Calu3 (cell line): ENCODE measurements at regions of chr7 and their contacts with region 1.

Region 1: DNA sequence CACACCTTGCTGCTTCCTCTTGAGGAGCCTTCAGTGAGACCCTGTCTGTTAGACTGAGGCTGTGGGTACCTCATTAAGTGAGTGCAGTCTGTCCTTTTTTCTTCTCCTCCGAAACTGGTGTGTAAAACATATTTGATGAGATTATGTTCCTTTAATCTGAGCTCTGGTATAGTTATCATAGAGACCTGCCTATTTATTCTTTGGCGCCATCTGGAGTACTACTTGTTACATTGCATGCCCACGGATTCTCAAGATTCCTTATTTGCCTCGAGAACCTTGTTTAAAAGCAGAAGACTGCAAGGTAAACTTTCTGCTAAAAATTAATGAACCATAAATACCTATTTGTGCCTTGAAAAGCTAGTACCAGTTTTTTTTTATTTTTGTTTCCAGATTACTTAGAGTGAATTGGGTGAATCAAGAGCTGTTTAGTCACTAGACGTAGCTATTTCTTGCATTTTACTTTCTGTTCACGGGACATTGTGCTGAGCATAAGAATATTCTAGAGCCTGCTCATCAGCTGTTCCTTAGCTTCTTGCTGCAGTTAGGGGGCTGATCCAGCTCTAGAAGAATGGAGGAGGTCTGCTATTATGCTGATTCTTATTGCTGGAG is 16.9 kb upstream of the STMP1 start:
- DNase-seq: peak; percentile 11
- H3K4me3 Mint-ChIP-seq: no peak overlapping the region
- H3K27ac Mint-ChIP-seq: no peak overlapping the region
- H3K4me1 Mint-ChIP-seq: no peaks in the 10 kb centered on the region
- H3K27me3 Mint-ChIP-seq: no peaks in the 10 kb centered on the region
- CTCF ChIP-seq: no peak

Region 2: GRCh38 chr7:135274495-135275268 is 370.7 kb before region 1 on chr7:
- CTCF ChIA-PET with region 1: interaction called, 12 read pairs
- intact Hi-C with region 1: loop called (anchors 1 kb)
- DNase-seq: peak; percentile 83
- H3K4me3 Mint-ChIP-seq: no peak overlapping the region
- H3K27ac Mint-ChIP-seq: no peak overlapping the region
- H3K4me1 Mint-ChIP-seq: no peaks in the 10 kb centered on the region
- H3K27me3 Mint-ChIP-seq: peaks cover 29% of the 10 kb centered on the region
- CTCF ChIP-seq: peak; percentile 76